Naive thymus-derived CD8-positive, alpha-beta T cell (primary cell): ENCODE measurements at regions of chr12 and their contacts with region 1.

Region 1: DNA sequence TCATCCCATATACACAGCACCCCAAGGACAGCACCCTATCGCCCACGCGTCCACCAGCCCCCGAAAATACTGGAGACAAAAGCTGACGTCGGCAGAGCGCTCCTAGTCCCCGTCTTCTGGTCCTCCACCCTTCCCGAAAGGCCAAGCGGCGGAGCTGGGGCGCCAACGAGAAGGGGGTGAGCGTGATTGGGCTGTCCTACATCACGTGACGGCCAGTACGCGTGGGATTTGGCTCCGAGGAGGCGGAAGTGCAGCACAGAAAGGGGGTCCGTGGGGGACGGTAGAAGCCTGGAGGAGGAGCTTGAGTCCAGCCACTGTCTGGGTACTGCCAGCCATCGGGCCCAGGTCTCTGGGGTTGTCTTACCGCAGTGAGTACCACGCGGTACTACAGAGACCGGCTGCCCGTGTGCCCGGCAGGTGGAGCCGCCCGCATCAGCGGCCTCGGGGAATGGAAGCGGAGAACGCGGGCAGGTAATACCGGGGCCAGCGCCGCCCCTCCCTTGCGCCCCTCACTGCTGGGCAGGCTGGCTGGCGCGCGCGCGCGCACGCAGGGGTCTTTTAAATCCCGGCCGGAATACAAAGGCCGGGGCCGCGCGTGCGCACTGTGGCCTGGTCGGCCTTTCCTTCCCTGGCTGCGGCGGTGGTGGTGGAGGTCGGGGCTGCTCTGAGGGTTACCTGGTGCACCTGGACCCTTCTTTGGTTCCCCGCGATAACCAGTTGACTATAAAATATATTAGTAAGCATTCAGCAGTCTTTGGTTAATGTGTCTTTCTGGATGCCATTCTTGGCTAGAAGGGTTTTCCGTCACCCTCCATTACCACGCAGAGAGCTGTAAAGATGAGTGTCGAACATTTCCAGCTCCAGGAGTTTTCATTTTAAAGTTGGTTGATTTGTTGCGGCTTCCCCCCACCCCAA is at the start of gene TDG:
- DNase-seq: peak; percentile 86 to 99 (median 97)
- ATAC-seq: peak; percentile 93 to 94
- H3K4me3 Mint-ChIP-seq: peak within 1 kb of the TSS; percentile 96 to 99 (median 98)
- H3K27ac Mint-ChIP-seq: peak within 1 kb of the TSS; percentile 93 to 99 (median 99)
- H3K4me1 Mint-ChIP-seq: peaks cover 24 to 64% (median 60%) of the 10 kb centered on the region in 4 donors
- H3K27me3 Mint-ChIP-seq: no peaks in the 10 kb centered on the region
- polyA plus RNA-seq, gene TDG: 19.0 to 21.4 (median 20.0) TPM

Region 2: GRCh38 chr12:103884316-103884715 is 81.5 kb before region 1 on chr12:
- POLR2A ChIA-PET with region 1: interaction called, 10 read pairs
- DNase-seq: peak; percentile 19 to 83 (median 46)
- ATAC-seq: peak; percentile 67 to 68
- H3K4me3 Mint-ChIP-seq: peak overlapping the region in 3 of 10 donors; percentile 13 to 54 (median 30)
- H3K27ac Mint-ChIP-seq: peak overlapping the region in 8 of 10 donors; percentile 36 to 90 (median 78)
- H3K4me1 Mint-ChIP-seq: peaks cover 9 to 47% (median 30%) of the 10 kb centered on the region in 4 donors
- H3K27me3 Mint-ChIP-seq: no peaks in the 10 kb centered on the region

Region 3: GRCh38 chr12:104064031-104064822 is 98.4 kb after region 1 on chr12 and contains the start of gene HCFC2:
- POLR2A ChIA-PET with region 1: interaction called, 27 read pairs
- DNase-seq: peak; percentile 76 to 91 (median 82)
- ATAC-seq: peak; percentile 93
- H3K4me3 Mint-ChIP-seq: peak within 1 kb of the TSS; percentile 90 to 97 (median 94)
- H3K27ac Mint-ChIP-seq: peak within 1 kb of the TSS; percentile 74 to 97 (median 93)
- H3K4me1 Mint-ChIP-seq: peaks cover 10 to 24% (median 18%) of the 10 kb centered on the region in 4 donors
- H3K27me3 Mint-ChIP-seq: peaks cover 0 to 12% (median 8%) of the 10 kb centered on the region in 5 donors
- polyA plus RNA-seq, gene HCFC2: 4.1 to 6.9 (median 6.3) TPM